ENCODE measurements at regions of chr7 and their contacts with region 1.

Region 1: GRCh38 chr7:3300651-3301378 is at the start of gene SDK1:
- DNase-seq: peak; percentile 96
- ATAC-seq: peak; percentile 89
- H3K4me3 ChIP-seq: peak within 1 kb of the TSS in 4 of 5 experiments; percentile 21 to 60 (median 46)
- H3K4me3 Mint-ChIP-seq: peak within 1 kb of the TSS; percentile 88
- H3K27ac ChIP-seq: no peak within 1 kb of the TSS
- H3K27ac Mint-ChIP-seq: no peak within 1 kb of the TSS
- H3K4me1 ChIP-seq: peaks cover 16% of the 10 kb centered on the region in 2 donors
- H3K4me1 Mint-ChIP-seq: peaks cover 14% of the 10 kb centered on the region
- H3K27me3 ChIP-seq: peaks cover 0 to 35% (median 19%) of the 10 kb centered on the region in 4 experiments
- H3K27me3 Mint-ChIP-seq: peaks cover 46% of the 10 kb centered on the region
- CTCF ChIP-seq: peak; percentile 83
- total RNA-seq, gene SDK1: 0.66 and 2.0 TPM in 2 replicates

Region 2: GRCh38 chr7:2886900-2887299 is 413.9 kb before region 1 on chr7:
- CTCF ChIA-PET with region 1: no interaction called
- POLR2A ChIA-PET with region 1: no interaction called
- intact Hi-C with region 1: loop called (anchors 10 kb)
- DNase-seq: peak; percentile 78
- ATAC-seq: peak; percentile 76
- H3K4me3 ChIP-seq: no peak overlapping the region
- H3K4me3 Mint-ChIP-seq: no peak overlapping the region
- H3K27ac ChIP-seq: no peak overlapping the region
- H3K27ac Mint-ChIP-seq: no peak overlapping the region
- H3K4me1 ChIP-seq: peaks cover 0 to 4% of the 10 kb centered on the region in 2 donors
- H3K4me1 Mint-ChIP-seq: peaks cover 5% of the 10 kb centered on the region
- H3K27me3 ChIP-seq: no peaks in the 10 kb centered on the region
- H3K27me3 Mint-ChIP-seq: no peaks in the 10 kb centered on the region
- CTCF ChIP-seq: peak; percentile 65

Region 3: DNA sequence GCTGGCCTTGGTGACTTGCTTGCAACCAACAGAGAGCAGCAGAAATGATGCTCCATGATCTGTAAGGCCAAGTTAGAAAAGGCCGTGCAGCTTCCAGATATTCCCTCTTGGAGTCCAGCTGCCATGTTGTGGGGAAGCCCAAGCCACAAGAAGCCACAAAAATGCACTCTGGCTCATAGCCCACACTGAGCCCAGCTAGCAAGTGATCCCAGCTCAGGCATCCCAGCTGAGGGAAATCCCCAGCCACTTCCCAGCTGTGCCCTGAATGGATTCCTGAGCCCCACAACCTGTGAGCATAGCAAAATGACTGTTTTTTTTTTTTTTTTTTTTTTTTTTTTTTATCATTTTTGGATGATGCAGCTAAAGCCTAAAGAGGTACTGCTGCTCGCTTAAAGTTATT is 10.8 kb before region 1 on chr7:
- CTCF ChIA-PET with region 1: no interaction called
- POLR2A ChIA-PET with region 1: no interaction called
- intact Hi-C with region 1: no loop called
- DNase-seq: no peak
- ATAC-seq: no peak
- H3K4me3 ChIP-seq: no peak overlapping the region
- H3K4me3 Mint-ChIP-seq: no peak overlapping the region
- H3K27ac ChIP-seq: no peak overlapping the region
- H3K27ac Mint-ChIP-seq: no peak overlapping the region
- H3K4me1 ChIP-seq: no peaks in the 10 kb centered on the region
- H3K4me1 Mint-ChIP-seq: no peaks in the 10 kb centered on the region
- H3K27me3 ChIP-seq: peaks cover 0 to 8% (median 0%) of the 10 kb centered on the region in 4 experiments
- H3K27me3 Mint-ChIP-seq: peaks cover 21% of the 10 kb centered on the region
- CTCF ChIP-seq: no peak

Region 4: DNA sequence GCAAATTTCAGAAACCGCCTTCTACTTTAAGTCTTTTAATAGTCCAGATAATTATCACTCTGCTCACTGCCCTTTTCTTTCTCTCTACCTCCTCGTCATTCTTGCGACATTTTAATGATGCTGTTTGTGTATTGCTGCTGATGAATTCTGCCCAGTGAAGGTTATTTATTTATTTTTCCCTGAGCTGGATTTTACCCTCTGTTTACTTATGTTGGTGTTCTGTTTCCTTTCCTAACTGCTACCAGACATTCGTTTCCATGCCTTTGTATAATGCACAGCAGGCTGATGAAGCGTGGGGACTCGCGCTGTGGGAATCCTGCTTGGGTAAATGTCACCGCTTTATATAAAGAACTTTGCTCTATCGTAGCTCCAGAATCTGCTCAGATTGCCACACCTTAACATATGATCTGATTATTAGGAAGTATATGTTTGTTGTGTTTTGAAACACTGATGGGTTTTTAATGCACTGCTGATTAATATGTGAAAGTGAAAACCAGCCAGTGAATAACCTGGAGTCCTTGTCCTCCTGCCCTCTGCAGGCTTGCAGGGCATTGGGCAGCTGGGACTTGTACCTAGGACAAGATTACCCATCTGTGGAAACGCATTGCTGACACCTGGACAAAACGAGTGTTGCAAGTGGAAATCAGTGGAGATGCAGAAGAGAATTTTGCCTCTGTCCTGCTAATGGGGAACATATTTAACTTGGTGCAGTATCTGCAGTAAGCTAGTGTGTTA is 291.8 kb after region 1 on chr7:
- CTCF ChIA-PET with region 1: no interaction called
- POLR2A ChIA-PET with region 1: interaction called, 3 read pairs
- intact Hi-C with region 1: loop called (anchors 10 kb)
- DNase-seq: no peak
- ATAC-seq: no peak
- H3K4me3 ChIP-seq: no peak overlapping the region
- H3K4me3 Mint-ChIP-seq: no peak overlapping the region
- H3K27ac ChIP-seq: no peak overlapping the region
- H3K27ac Mint-ChIP-seq: peak overlapping the region; percentile 62
- H3K4me1 ChIP-seq: peaks cover 17 to 19% of the 10 kb centered on the region in 2 donors
- H3K4me1 Mint-ChIP-seq: peaks cover 29% of the 10 kb centered on the region
- H3K27me3 ChIP-seq: no peaks in the 10 kb centered on the region
- H3K27me3 Mint-ChIP-seq: no peaks in the 10 kb centered on the region
- CTCF ChIP-seq: no peak

Region 5: DNA sequence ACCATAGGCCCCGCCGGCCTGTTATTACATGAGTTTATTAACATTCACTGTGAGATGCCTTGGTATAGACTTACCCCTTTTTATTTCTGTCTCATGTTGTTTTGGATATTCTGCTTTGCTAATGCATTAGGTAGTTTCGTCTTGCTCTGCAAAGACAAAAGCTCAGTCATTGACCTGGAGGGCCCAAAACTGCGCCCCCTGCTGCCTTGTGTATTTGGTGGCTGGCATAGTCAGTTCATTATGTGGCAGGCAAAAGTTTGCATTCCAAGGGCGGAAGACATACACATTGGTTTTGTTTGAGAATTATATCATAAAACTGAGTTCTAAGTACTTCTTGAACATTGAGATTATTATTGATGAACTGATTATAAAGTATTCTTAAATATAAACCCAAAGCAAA is 372.7 kb after region 1 on chr7:
- CTCF ChIA-PET with region 1: interaction called, 6 read pairs
- POLR2A ChIA-PET with region 1: no interaction called
- intact Hi-C with region 1: loop called (anchors 2 kb)
- DNase-seq: peak; percentile 20
- ATAC-seq: no peak
- H3K4me3 ChIP-seq: no peak overlapping the region
- H3K4me3 Mint-ChIP-seq: no peak overlapping the region
- H3K27ac ChIP-seq: no peak overlapping the region
- H3K27ac Mint-ChIP-seq: no peak overlapping the region
- H3K4me1 ChIP-seq: peaks cover 5 to 7% of the 10 kb centered on the region in 2 donors
- H3K4me1 Mint-ChIP-seq: peaks cover 12% of the 10 kb centered on the region
- H3K27me3 ChIP-seq: no peaks in the 10 kb centered on the region
- H3K27me3 Mint-ChIP-seq: no peaks in the 10 kb centered on the region
- CTCF ChIP-seq: no peak

Region 6: GRCh38 chr7:3897438-3898385 is 596.9 kb after region 1 on chr7:
- CTCF ChIA-PET with region 1: interaction called, 23 read pairs
- POLR2A ChIA-PET with region 1: no interaction called
- intact Hi-C with region 1: no loop called
- DNase-seq: peak; percentile 71
- ATAC-seq: peak; percentile 62
- H3K4me3 ChIP-seq: no peak overlapping the region
- H3K4me3 Mint-ChIP-seq: no peak overlapping the region
- H3K27ac ChIP-seq: no peak overlapping the region
- H3K27ac Mint-ChIP-seq: no peak overlapping the region
- H3K4me1 ChIP-seq: no peaks in the 10 kb centered on the region
- H3K4me1 Mint-ChIP-seq: no peaks in the 10 kb centered on the region
- H3K27me3 ChIP-seq: peaks cover 0 to 3% (median 1%) of the 10 kb centered on the region in 4 experiments
- H3K27me3 Mint-ChIP-seq: peaks cover 20% of the 10 kb centered on the region
- CTCF ChIP-seq: peak; percentile 91

Region 7: DNA sequence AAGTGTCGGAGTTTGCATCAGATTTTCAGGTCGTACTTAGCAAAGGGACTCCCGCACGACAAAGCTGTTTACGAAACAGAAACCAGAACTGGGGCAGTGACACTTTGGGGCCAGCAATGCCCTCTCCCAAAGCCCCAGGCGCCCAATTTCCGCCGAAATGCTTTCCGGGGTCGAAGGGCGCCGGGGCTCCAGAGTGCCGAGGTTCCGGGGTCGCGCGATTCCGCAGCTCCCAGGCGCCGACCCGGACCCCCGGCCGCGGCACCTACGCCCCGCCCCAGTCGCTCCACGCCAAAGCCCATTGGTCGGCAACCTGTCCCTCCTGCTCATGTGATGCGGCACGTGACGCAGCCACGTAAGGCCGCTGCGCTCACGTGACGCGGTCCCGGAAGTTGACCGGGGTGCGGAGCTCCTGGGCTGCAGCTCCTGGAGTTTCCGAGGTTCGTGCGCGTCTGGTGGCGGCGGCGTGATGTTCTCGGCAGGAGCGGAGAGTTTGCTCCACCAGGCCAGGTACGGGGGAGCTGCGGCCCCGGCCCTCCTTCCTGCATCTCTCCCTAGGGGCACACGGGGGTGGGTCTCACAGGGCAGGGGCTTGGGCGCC is 1474.5 kb after region 1 on chr7 and contains the start of gene AP5Z1:
- CTCF ChIA-PET with region 1: no interaction called
- POLR2A ChIA-PET with region 1: no interaction called
- intact Hi-C with region 1: loop called (anchors 5 kb)
- DNase-seq: peak; percentile 98
- ATAC-seq: peak; percentile 93
- H3K4me3 ChIP-seq: peak within 1 kb of the TSS; percentile 87 to 97 (median 95)
- H3K4me3 Mint-ChIP-seq: peak within 1 kb of the TSS; percentile 97
- H3K27ac ChIP-seq: peak within 1 kb of the TSS; percentile 94 to 95
- H3K27ac Mint-ChIP-seq: peak within 1 kb of the TSS; percentile 99
- H3K4me1 ChIP-seq: peaks cover 14 to 26% of the 10 kb centered on the region in 2 donors
- H3K4me1 Mint-ChIP-seq: peaks cover 39% of the 10 kb centered on the region
- H3K27me3 ChIP-seq: no peaks in the 10 kb centered on the region
- H3K27me3 Mint-ChIP-seq: no peaks in the 10 kb centered on the region
- CTCF ChIP-seq: no peak
- total RNA-seq, gene AP5Z1: 108 and 113 TPM in 2 replicates

Measured in B cell (primary cell).